Dendritic cell treated with granulocyte-macrophage colony-stimulating factor and Interleukin-4, amounts not matched to agents 40 ng/mL and 50 ng/mL, for 4 days (primary cell): ENCODE measurements at regions of chr13 and their contacts with region 1.

Region 1: GRCh38 chr13:65638572-65639168 is 1591.5 kb downstream of the PCDH9 start:
- H3K4me3 Mint-ChIP-seq: no peak overlapping the region
- H3K27ac Mint-ChIP-seq: no peak overlapping the region
- H3K4me1 Mint-ChIP-seq: no peaks in the 10 kb centered on the region
- H3K27me3 Mint-ChIP-seq: no peaks in the 10 kb centered on the region

Region 2: GRCh38 chr13:64529874-64530485 is 1108.7 kb before region 1 on chr13:
- intact Hi-C with region 1: loop called (anchors 10 kb)
- H3K4me3 Mint-ChIP-seq: no peak overlapping the region
- H3K27ac Mint-ChIP-seq: no peak overlapping the region
- H3K4me1 Mint-ChIP-seq: no peaks in the 10 kb centered on the region
- H3K27me3 Mint-ChIP-seq: no peaks in the 10 kb centered on the region

Region 3: DNA sequence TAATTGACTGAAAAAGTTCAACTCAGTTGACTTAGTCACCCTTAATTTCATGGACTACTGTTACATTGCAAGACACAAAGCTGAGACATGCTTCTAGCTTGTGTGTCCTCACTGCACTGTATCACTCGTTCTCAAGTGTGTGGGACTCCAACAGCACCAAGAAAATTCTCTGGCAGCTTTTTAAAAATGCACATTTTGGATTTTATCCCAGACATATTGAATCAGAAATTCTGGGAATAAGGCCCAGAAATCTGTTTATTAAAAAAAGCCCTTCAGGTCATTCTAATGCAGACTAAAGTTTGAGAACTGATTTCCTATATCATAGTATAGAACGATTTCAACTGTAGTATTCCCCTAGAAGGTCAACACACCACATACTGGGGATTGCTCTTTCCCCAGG is 106.2 kb after region 1 on chr13:
- intact Hi-C with region 1: no loop called
- H3K4me3 Mint-ChIP-seq: no peak overlapping the region
- H3K27ac Mint-ChIP-seq: no peak overlapping the region
- H3K4me1 Mint-ChIP-seq: no peaks in the 10 kb centered on the region
- H3K27me3 Mint-ChIP-seq: no peaks in the 10 kb centered on the region

Region 4: DNA sequence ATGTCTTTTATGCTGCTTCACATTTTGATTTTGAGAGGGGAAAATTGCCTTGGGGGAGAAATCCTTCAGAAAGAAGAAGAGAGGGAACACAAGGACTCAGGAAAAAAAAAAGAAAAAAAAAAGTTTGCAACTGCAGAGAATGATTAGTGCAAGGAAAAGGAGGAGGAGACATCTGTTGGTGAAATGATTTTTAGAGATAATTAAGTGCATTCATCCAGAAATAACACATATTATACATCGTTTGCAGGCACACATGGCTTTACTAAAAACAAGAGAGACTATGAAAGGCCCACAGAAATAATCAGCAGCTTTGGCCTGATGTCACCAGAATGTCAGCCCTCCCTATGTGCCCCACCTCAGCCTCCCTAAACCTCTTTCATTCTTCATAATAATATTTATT is 533.2 kb after region 1 on chr13:
- intact Hi-C with region 1: no loop called
- H3K4me3 Mint-ChIP-seq: no peak overlapping the region
- H3K27ac Mint-ChIP-seq: no peak overlapping the region
- H3K4me1 Mint-ChIP-seq: no peaks in the 10 kb centered on the region
- H3K27me3 Mint-ChIP-seq: no peaks in the 10 kb centered on the region